Activated T-helper 1 cell treated with anti-CD3 and anti-CD28 coated beads, Interleukin-12 subunit alpha, Interleukin-12 subunit beta, Interleukin-2, Interleukin-4 antibody, amounts not matched to agents 30 ng/mL and 10 ng/mL and 1 ng/mL, durations not matched to agents 14 hours and 24 hours and 36 hours (primary cell): ENCODE measurements at regions of chr19 and their contacts with region 1.

Region 1: DNA sequence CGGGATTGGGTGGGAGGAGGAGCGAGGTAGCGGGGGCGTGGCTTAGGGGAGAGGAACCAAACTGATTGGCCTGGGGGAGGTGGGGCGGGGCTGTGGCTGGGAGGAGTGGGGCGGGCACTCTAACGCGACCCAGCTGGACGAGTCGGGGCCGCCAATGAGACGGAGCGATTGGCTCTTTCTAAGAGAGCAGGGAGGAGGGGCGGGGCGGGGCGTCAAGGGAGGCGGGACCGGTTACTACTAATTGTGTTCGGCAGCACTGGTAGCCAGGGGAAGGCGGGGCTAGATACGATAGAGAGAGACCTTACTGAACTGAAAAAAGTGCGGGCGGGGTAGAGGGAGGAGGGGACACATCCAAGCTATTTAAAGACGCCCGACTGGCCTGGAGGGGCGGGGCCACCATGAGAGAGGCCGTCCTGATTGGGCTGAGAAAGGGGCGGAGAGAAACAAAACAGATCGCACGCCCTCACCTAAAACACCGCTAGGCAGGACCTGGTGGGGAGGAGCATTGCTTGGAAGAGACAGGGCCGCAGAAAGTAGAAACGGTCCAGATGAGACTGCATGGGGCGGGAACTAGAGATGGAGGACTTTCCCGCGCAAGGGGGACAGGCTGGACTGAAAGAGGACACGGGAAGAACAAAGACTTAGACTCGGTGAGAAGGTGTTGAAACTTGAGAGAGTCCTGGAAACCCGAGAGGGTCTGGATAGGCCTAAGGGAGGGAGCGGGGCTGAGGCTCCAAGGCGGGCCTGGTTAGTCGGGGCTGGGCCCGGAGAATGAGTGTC is at the start of gene KCNC3:
- DNase-seq: peak; percentile 96
- H3K4me3 Mint-ChIP-seq: peak within 1 kb of the TSS; percentile 84
- H3K27ac Mint-ChIP-seq: peak within 1 kb of the TSS; percentile 89
- H3K4me1 Mint-ChIP-seq: peaks cover 72% of the 10 kb centered on the region
- H3K27me3 Mint-ChIP-seq: peaks cover 16% of the 10 kb centered on the region
- total RNA-seq, gene KCNC3: 23.7 and 24.0 TPM in 2 replicates

Region 2: DNA sequence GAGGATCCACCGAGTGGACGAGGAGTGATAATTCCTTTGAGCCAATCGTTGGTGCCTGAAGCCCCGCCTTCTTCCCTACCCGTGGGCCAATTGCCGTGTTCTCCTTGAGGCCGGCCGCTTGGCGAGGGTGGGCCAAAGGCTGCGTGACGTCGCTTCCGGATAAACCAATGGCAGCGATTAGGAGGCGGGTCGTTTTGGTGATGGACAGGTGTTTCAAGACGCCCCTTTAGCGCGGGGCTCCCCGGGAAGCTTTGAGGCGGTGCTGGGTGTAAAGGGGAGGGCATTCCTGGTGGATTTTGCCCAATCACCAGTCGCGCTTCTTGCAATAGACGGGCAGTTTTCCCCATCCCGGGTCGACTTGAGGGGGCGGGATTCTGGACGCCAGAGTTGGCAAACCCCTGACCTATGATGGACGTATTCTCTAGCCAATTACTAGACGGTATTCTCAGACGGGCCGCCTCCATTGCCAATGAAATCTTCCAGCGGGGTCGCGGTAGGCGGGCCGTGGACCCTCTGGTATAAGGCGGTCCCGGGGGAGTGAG is 652.6 kb before region 1 on chr19:
- intact Hi-C with region 1: loop called (anchors 5 kb)
- DNase-seq: peak; percentile 98
- H3K4me3 Mint-ChIP-seq: peak overlapping the region; percentile 95
- H3K27ac Mint-ChIP-seq: peak overlapping the region; percentile 99
- H3K4me1 Mint-ChIP-seq: peaks cover 41% of the 10 kb centered on the region
- H3K27me3 Mint-ChIP-seq: no peaks in the 10 kb centered on the region

Region 3: GRCh38 chr19:50315773-50316448 is 13.4 kb before region 1 on chr19:
- intact Hi-C with region 1: loop called (anchors 1 kb)
- DNase-seq: no peak
- H3K4me3 Mint-ChIP-seq: peak overlapping the region; percentile 81
- H3K27ac Mint-ChIP-seq: peak overlapping the region; percentile 55
- H3K4me1 Mint-ChIP-seq: peaks cover 18% of the 10 kb centered on the region
- H3K27me3 Mint-ChIP-seq: peaks cover 38% of the 10 kb centered on the region

Region 4: GRCh38 chr19:50376166-50377050 is 47.1 kb after region 1 on chr19 and contains the start of gene NR1H2:
- intact Hi-C with region 1: loop called (anchors 1 kb)
- DNase-seq: peak; percentile 93
- H3K4me3 Mint-ChIP-seq: peak within 1 kb of the TSS; percentile 100
- H3K27ac Mint-ChIP-seq: peak within 1 kb of the TSS; percentile 99
- H3K4me1 Mint-ChIP-seq: peaks cover 27% of the 10 kb centered on the region
- H3K27me3 Mint-ChIP-seq: no peaks in the 10 kb centered on the region
- total RNA-seq, gene NR1H2: 84.3 and 84.8 TPM in 2 replicates

Region 5: GRCh38 chr19:50401605-50402450 is 72.5 kb after region 1 on chr19:
- intact Hi-C with region 1: no loop called
- DNase-seq: no peak
- H3K4me3 Mint-ChIP-seq: no peak overlapping the region
- H3K27ac Mint-ChIP-seq: no peak overlapping the region
- H3K4me1 Mint-ChIP-seq: no peaks in the 10 kb centered on the region
- H3K27me3 Mint-ChIP-seq: no peaks in the 10 kb centered on the region

Region 6: GRCh38 chr19:50461066-50461875 is 131.9 kb after region 1 on chr19:
- intact Hi-C with region 1: no loop called
- DNase-seq: peak; percentile 56
- H3K4me3 Mint-ChIP-seq: no peak overlapping the region
- H3K27ac Mint-ChIP-seq: no peak overlapping the region
- H3K4me1 Mint-ChIP-seq: peaks cover 8% of the 10 kb centered on the region
- H3K27me3 Mint-ChIP-seq: no peaks in the 10 kb centered on the region

Region 7: GRCh38 chr19:50657712-50658440 is 328.5 kb after region 1 on chr19:
- intact Hi-C with region 1: loop called (anchors 5 kb)
- DNase-seq: peak; percentile 69
- H3K4me3 Mint-ChIP-seq: peak overlapping the region; percentile 78
- H3K27ac Mint-ChIP-seq: peak overlapping the region; percentile 87
- H3K4me1 Mint-ChIP-seq: peaks cover 15% of the 10 kb centered on the region
- H3K27me3 Mint-ChIP-seq: peaks cover 24% of the 10 kb centered on the region

Region 8: GRCh38 chr19:51108066-51108804 is 778.9 kb after region 1 on chr19 and contains the start of gene CTU1:
- intact Hi-C with region 1: loop called (anchors 2 kb)
- DNase-seq: peak; percentile 98
- H3K4me3 Mint-ChIP-seq: peak within 1 kb of the TSS; percentile 92
- H3K27ac Mint-ChIP-seq: peak within 1 kb of the TSS; percentile 96
- H3K4me1 Mint-ChIP-seq: peaks cover 24% of the 10 kb centered on the region
- H3K27me3 Mint-ChIP-seq: no peaks in the 10 kb centered on the region
- total RNA-seq, gene CTU1: 12.5 and 14.0 TPM in 2 replicates